Thyroid gland (tissue), 4 donors: ENCODE measurements at regions of chr2 and their contacts with region 1.

Region 1: DNA sequence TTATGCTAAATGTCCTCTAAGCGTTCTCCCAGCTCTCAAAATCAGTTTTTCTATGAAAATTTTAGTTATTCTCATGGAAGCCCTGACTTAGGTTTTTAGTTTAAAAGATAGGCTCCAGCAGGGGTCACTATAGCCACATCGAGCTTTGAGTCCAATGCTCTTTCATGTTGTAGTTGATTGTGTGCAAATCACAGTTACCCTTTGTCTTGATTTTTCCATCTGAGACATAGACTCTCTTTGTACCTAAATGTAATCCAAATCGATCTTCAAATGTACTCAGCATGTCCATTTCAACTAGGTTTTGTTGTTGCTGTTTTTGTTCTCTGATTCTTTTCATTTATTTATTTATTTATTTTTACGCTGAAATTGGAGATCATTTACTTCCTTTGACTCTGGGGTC is 26.4 kb upstream of the MSTN start:
- DNase-seq: peak; percentile 31 to 51
- H3K4me3 ChIP-seq: no peak overlapping the region
- H3K27ac ChIP-seq: no peak overlapping the region
- H3K4me1 ChIP-seq: no peaks in the 10 kb centered on the region
- H3K27me3 ChIP-seq: no peaks in the 10 kb centered on the region
- CTCF ChIP-seq: peak; percentile 21 to 74 (median 68)
- POLR2A ChIP-seq: no peak

Region 2: GRCh38 chr2:190277234-190278112 is 188.6 kb after region 1 on chr2:
- intact Hi-C with region 1: loop called (anchors 5 kb)
- DNase-seq: peak in 1 of 2 donors; percentile 21
- H3K4me3 ChIP-seq: no peak overlapping the region
- H3K27ac ChIP-seq: no peak overlapping the region
- H3K4me1 ChIP-seq: peaks cover 0 to 16% of the 10 kb centered on the region in 2 donors
- H3K27me3 ChIP-seq: no peaks in the 10 kb centered on the region
- CTCF ChIP-seq: peak in 3 of 6 experiments; percentile 54 to 60 (median 60)
- POLR2A ChIP-seq: no peak

Region 3: GRCh38 chr2:190382851-190383250 is 293.9 kb after region 1 on chr2:
- intact Hi-C with region 1: loop called (anchors 10 kb)
- DNase-seq: peak; percentile 21 to 35
- H3K4me3 ChIP-seq: no peak overlapping the region
- H3K27ac ChIP-seq: no peak overlapping the region
- H3K4me1 ChIP-seq: no peaks in the 10 kb centered on the region
- H3K27me3 ChIP-seq: no peaks in the 10 kb centered on the region
- CTCF ChIP-seq: peak; percentile 39 to 89 (median 73)
- POLR2A ChIP-seq: no peak